ENCODE measurements at regions of chr17 and their contacts with region 1.

Region 1: GRCh38 chr17:7056386-7056785 is 12.5 kb upstream of the SLC16A11 start:
- DNase-seq: no peak
- H3K4me3 ChIP-seq: no peak overlapping the region
- H3K27ac ChIP-seq: no peak overlapping the region
- H3K4me1 ChIP-seq: no peaks in the 10 kb centered on the region
- H3K27me3 ChIP-seq: no peaks in the 10 kb centered on the region
- CTCF ChIP-seq: no peak
- POLR2A ChIP-seq: no peak

Region 2: DNA sequence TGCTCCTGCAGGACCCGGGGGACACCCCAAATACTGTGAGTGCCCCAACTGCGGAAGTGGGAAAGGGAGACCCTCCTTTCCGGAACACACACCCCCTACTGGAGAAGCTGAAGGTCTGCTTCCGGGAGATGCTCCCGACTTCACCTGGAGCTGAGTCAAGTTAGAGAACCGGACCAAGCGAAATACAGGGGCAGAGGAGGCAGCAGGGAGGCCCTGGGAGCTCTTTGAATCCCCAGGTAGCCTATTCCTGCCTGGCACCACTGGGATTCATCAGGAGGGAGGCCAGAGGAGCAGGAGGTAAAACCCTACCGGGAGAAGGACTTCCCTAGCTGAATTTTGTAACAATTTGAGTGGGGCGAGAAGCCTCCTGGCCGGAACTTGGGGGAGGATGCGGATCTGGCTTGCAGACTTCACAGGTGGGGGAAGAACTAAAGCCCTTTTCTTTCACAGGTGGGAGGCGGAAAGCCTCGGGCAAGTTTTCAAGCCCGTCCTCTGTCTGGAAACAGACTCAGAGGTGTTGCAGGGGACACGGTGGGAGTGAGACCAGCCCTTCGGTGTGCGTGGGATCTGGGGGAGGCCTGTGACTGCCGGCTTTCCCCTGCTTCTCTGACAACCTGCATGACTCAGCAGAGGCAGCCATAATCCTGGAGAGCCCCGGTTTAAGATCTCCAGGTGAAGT is 202.5 kb before region 1 on chr17:
- intact Hi-C with region 1: no loop called
- DNase-seq: no peak
- H3K4me3 ChIP-seq: no peak overlapping the region
- H3K27ac ChIP-seq: no peak overlapping the region
- H3K4me1 ChIP-seq: no peaks in the 10 kb centered on the region
- H3K27me3 ChIP-seq: no peaks in the 10 kb centered on the region
- CTCF ChIP-seq: no peak
- POLR2A ChIP-seq: no peak

Region 3: DNA sequence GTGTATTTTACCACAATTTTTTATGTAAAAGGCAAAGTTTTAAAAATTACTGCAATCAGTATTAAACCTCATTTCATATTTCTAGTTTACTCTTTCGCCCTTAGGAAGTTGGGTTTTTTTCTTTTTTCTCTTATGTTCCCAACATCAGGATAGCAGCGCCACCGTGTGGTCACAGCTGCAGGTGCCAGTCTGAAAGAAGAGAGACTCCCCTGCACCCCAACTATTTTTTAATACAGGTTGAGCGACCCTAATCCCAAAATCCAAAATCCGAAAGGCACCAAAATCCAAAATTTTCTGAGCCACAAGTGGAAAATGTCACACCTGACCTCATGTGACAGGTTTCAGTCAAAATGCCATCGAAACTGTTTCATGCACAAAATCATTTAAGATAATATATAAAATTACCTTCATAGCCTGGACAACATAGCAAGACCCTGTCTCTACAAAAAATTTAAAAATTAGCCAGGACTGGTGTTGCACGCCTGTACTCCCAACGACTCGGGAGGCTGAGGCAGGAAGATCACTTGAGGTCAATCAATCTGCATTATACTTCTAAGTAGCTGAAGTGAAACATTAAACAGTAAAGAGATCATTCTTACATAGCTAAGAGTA is 80.0 kb after region 1 on chr17:
- intact Hi-C with region 1: loop called (anchors 2 to 5 kb)
- DNase-seq: peak; percentile 69 to 88 (median 76)
- H3K4me3 ChIP-seq: peak overlapping the region in 1 of 4 donors; percentile 21
- H3K27ac ChIP-seq: no peak overlapping the region
- H3K4me1 ChIP-seq: peaks cover 0 to 15% of the 10 kb centered on the region in 2 donors
- H3K27me3 ChIP-seq: peaks cover 8% of the 10 kb centered on the region
- CTCF ChIP-seq: peak; percentile 82 to 95 (median 90)
- POLR2A ChIP-seq: no peak

Region 4: GRCh38 chr17:7296189-7296902 is 240.0 kb after region 1 on chr17:
- intact Hi-C with region 1: loop called in 1 of 2 experiments (anchors 10 kb)
- DNase-seq: peak; percentile 84 to 89 (median 87)
- H3K4me3 ChIP-seq: no peak overlapping the region
- H3K27ac ChIP-seq: no peak overlapping the region
- H3K4me1 ChIP-seq: peaks cover 12 to 28% of the 10 kb centered on the region in 2 donors
- H3K27me3 ChIP-seq: peaks cover 10% of the 10 kb centered on the region
- CTCF ChIP-seq: peak; percentile 71 to 98 (median 90)
- POLR2A ChIP-seq: peak in 1 of 2 donors; percentile 9

Measured in adrenal gland (tissue), 19 donors.